Cardiac septum (tissue), 1 donor: ENCODE measurements at regions of chr21 and their contacts with region 1.

Region 1: DNA sequence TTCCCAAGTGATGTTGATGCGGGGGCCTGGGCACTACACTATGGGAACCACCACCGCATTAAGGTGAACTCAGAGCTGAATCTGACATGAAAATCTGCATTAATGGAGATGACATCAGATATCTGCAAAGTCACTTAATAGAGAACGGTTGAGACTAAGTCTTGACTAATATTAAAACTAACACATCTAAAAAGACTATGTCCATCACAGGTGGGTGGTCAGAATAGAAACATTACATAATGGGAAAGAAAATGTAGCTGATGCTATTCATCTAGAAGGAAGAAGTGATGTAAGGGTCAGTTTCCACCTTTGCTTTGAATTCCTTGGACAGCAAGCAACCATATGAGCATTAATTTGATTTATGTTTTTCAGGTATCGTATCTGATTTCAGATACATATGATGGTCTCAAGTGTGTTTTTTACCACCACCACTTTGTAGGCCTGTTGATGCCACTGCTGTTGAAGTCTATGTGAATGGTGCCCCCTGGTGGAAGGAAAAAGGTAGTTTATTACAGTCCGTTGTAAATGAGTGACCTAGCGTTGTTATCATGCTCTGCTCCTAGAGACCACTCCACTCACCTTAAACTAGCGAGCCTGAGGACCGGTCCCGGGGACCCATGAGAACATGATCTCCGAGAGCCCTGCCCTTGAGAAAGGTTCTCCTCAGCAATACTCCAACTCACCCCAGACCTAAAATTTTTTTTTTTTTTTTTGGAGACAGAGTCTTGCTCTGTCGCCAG is 73.5 kb downstream of the BACH1 start:
- DNase-seq: no peak

Region 2: GRCh38 chr21:29024474-29025327 is 347.5 kb before region 1 on chr21 and contains the start of gene USP16:
- intact Hi-C with region 1: no loop called
- DNase-seq: peak; percentile 97
- total RNA-seq, gene USP16: 37.8 TPM

Region 3: DNA sequence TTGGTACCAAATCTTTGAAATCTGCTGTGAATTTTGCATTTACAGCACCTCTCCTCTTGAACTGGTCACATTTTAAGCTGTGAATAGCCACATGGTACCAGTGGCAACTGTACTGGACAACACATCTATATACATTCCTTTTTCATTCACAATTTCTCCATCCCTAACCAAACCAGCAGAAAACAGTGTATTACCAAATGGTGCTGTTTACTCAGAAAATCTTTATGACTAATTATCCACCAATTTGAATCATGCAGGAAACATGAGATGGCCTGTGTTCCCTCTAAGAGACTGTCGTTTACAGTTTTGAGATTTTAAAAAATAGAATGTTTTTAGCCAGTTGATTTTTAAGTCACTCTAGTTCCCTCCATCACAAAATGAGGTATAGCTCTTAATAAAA is 281.2 kb before region 1 on chr21:
- intact Hi-C with region 1: loop called (anchors 2 kb)
- DNase-seq: no peak